Vagina (tissue), 2 donors: ENCODE measurements at regions of chr19 and their contacts with region 1.

Region 1: DNA sequence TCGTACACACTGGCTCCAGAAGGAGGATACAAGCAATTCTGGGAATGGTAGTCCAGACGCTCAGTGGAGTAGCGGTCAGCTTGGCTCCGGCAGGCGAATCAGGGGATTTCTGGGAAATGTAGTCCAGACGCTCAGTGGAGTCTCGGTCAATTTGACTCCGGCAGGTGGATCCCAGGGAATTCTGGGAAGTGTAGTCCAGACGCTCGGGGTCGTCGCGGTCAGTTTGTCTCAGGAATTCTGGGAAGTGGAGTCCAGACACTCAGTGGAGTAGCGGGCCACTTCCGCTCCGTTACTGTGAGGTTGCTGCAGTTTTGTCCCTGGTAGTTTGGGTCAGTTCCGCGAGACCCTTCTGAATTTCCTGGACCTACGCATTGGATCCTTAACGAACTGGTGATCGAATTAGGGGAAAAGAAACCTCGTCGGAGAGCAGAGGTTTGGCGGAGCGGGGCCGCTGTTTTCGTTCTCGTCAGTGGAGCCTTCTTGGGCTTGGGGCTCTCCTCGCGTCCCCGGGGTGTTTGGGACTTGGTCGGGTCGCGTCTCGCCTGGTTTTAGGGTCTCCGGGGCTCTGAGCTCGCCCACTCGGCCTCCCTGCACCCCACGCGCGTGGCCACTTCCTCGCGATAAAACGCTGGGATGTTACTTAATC is at the start of gene ZNF225:
- DNase-seq: peak in 1 of 2 donors; percentile 98
- H3K4me3 ChIP-seq: peak within 1 kb of the TSS; percentile 65 to 71
- H3K27ac ChIP-seq: peak within 1 kb of the TSS; percentile 22
- H3K4me1 ChIP-seq: peaks cover 10% of the 10 kb centered on the region
- H3K27me3 ChIP-seq: no peaks in the 10 kb centered on the region
- CTCF ChIP-seq: peak in 1 of 3 experiments; percentile 2
- POLR2A ChIP-seq: no peak
- total RNA-seq, gene ZNF225: 3.7 TPM

Region 2: DNA sequence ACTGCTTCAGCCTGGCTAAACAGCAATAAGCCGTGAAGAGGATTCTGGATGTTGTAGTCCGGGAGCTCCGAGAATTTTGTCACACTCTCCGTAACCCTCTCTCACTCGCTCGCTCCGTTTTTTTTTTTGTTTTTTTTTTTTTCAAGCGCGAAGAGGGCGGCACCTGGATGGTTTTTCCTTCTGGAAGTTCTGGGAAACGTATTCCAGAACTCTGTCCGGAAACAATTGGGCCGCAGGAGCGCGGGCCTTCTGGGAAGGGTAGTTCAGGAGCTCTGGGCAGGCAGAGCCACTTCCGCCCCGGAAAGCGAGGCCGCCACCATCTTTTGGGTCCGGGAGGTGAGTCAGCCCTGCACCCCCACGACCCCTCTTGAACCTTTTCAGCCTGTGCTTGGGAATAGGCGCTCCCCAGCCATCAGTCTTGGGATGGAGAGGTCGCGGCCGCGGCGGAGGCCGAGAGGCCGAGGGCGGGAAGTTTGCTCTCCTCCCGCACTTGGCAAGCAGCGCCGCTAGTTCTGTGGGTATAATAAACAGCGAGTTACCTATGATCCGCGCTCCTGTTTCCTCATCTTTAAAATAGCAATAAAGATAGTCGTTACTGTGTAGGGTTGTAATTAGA is 99.1 kb after region 1 on chr19 and contains the start of gene ZNF227:
- intact Hi-C with region 1: loop called (anchors 2 kb)
- DNase-seq: peak in 1 of 2 donors; percentile 91
- H3K4me3 ChIP-seq: peak within 1 kb of the TSS; percentile 45 to 64
- H3K27ac ChIP-seq: peak within 1 kb of the TSS; percentile 75
- H3K4me1 ChIP-seq: peaks cover 20% of the 10 kb centered on the region
- H3K27me3 ChIP-seq: no peaks in the 10 kb centered on the region
- CTCF ChIP-seq: no peak
- POLR2A ChIP-seq: peak in 1 of 2 donors; percentile 18
- total RNA-seq, gene ZNF227: 14.2 TPM

Region 3: DNA sequence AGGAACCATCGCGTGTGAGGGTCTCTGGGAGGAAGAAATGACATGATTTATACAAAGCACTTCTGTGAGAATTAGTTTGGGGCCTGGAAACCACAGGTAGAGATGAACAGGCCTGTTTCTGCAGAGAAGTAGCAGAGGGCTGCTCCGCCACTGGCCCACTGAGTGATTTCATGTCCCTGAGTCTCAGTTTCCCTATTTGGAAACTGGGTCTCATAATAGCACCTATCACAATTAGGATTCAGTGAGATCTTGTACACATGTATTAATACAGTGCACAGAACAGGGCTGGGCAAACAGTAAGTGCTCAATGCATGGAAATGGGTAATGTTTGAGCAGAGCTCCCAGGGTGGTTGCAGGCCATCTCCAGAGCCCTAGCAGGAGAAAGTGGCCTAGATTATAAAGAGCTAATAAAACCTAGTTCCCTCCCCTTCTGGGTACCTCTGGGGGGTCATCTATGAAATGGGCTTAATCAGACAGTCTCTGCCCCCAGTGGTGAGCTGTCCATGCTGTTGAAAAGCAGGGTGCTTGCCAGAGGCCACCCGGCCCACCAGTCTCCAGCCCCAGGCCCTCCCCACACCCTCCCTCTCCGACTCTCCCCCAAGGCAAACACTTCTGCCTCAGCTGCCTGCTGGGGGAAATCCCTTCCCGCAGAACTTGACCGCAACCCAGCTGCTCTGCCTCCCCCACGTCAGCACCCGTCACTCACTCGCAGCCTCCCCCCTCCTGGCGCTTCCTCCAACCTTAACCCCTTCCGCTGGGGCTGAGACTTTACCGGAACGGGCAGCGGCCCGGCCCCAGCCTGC is 639.8 kb after region 1 on chr19:
- intact Hi-C with region 1: no loop called
- DNase-seq: no peak
- H3K4me3 ChIP-seq: peak overlapping the region; percentile 43 to 52
- H3K27ac ChIP-seq: peak overlapping the region; percentile 92
- H3K4me1 ChIP-seq: peaks cover 84% of the 10 kb centered on the region
- H3K27me3 ChIP-seq: no peaks in the 10 kb centered on the region
- CTCF ChIP-seq: no peak
- POLR2A ChIP-seq: peak in 1 of 2 donors; percentile 17